ENCODE measurements at regions of chr5 and their contacts with region 1.

Region 1: GRCh38 chr5:38162625-38163024 is 95.7 kb upstream of the EGFLAM start:
- DNase-seq: no peak
- H3K4me3 ChIP-seq: no peak overlapping the region; a peak in 1 of 4 replicates
- H3K27ac ChIP-seq: no peak overlapping the region
- H3K4me1 ChIP-seq: no peaks in the 10 kb centered on the region
- H3K27me3 ChIP-seq: peaks cover 47% of the 10 kb centered on the region
- CTCF ChIP-seq: no peak
- EP300 ChIP-seq: no peak
- RAD21 ChIP-seq: no peak

Region 2: DNA sequence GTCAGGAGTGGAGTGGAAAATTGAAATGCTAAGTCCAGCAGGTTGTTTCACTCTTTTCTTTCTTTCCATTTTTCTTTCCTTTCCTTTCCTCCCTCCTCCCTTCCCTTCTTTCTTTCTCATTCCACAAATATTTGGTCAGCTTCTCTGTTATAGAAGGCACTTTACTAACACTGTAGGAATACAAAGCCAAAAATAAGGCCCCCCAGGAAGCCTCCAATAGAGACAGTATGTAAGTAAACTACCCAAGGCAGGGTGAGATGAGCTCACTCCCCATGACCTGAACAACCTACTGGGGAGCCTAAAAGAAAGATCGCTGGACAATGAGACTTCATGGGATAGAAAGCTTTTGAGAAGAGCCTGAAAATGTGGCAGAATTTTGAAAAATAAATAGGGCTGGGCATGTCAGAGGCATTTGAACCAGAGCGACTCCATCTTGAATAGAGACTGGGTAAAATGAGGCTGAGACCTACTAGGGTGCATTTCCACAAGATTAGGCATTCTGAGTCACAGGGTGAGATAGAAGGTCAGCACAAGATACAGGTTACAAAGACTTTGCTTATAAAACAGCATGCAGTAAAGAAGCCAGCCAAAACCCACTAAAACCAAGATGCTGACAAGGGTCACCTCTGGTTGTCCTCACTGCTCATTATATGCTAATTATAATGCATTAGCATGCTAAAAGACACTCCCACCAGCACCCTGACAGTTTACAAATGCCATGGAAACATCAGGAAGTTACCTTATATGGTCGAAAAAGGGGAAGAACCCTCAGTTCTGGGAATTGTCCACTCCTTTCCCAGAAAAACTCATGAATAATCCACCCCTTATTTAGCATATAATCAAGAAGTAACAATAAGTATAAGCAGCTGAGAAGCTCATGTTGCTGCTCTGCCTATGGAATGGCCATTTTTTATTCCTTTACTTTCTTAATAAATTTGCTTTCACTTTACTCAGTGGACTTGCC is 63.1 kb before region 1 on chr5:
- CTCF ChIA-PET with region 1: no interaction called
- POLR2A ChIA-PET with region 1: no interaction called
- DNase-seq: no peak
- H3K4me3 ChIP-seq: no peak overlapping the region
- H3K27ac ChIP-seq: no peak overlapping the region
- H3K4me1 ChIP-seq: no peaks in the 10 kb centered on the region
- H3K27me3 ChIP-seq: no peaks in the 10 kb centered on the region
- CTCF ChIP-seq: no peak
- EP300 ChIP-seq: no peak
- RAD21 ChIP-seq: no peak

Region 3: DNA sequence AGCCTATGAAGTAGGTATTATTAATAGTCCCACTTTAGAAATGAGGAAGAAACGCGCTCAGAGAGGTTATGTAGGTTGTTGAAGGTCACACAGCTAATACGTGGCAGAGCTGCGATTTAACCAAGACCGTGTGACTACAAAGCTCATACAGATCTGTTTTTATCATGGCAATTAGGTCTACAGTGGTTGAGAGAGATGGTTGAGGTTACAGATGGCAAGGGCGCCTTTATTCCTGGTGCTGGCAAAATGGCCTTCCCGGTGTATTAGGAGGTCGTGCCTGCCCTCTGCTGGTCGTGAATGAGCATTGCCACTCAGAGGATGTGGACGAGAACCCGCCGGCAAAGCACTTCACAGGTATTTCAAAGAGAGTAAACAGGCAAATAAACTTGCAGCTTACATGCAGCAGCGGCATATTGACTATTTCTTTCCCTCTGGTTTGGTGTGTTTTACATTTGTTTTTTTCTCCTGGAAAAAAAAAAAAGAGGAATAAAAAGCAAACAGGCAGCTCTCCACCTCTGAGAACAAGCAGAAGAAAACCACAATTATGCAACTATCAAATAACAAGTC is 30.5 kb after region 1 on chr5:
- CTCF ChIA-PET with region 1: interaction called, 12 read pairs
- POLR2A ChIA-PET with region 1: no interaction called
- DNase-seq: peak; percentile 73
- H3K4me3 ChIP-seq: no peak overlapping the region; a peak in 1 of 4 replicates
- H3K27ac ChIP-seq: no peak overlapping the region
- H3K4me1 ChIP-seq: no peaks in the 10 kb centered on the region
- H3K27me3 ChIP-seq: peaks cover 20% of the 10 kb centered on the region; the same call in 1 of the 2 replicates
- CTCF ChIP-seq: peak; percentile 94
- EP300 ChIP-seq: no peak
- RAD21 ChIP-seq: peak; percentile 90